ENCODE measurements at regions of chr2 and their contacts with region 1.

Region 1: GRCh38 chr2:96868555-96869280 is 1.2 kb downstream of the SEMA4C start:
- DNase-seq: peak; percentile 72 to 87
- H3K4me3 ChIP-seq: peak overlapping the region; percentile 82
- H3K27ac ChIP-seq: peak overlapping the region; percentile 43; the same call in 1 of the 2 replicates
- H3K4me1 ChIP-seq: peaks cover 37% of the 10 kb centered on the region
- H3K27me3 ChIP-seq: no peaks in the 10 kb centered on the region
- CTCF ChIP-seq: peak; percentile 86

Region 2: DNA sequence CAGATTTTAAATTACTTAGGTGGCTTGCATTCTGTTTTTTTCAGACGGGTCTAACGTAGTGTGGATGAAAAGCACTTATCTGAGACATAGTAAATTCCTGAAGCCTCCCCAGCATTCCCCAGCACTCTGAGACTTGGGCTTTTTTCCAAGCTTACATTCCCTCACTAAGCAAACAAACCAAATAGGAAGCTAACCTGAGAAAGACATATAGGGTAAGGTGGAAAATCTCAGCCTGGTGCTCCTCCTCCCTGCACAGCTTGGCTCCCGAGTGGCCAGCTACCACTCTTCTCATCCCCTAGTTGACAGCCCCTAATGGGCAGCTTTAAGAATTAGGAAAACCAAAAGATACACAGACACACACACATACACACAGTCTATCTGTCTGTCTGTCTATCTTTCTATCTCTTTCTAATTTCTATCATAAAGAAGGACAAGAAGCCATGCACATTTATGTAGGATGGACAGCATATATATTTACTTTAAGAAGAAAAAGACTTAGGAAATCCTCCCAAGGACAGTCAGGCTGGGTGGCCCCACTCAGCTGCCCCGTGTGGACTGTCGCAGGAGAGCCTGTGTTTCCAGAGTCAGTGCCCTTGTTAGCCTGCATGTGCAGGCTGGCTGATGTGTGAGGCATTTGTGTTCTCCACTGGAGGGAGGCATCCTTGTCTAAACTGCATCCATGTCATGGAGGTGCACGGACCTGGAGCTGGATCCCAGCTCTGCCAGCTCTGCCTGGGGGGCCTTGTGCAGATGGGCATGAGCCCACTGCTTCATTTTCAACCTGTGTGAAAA is 44.4 kb before region 1 on chr2:
- CTCF ChIA-PET with region 1: no interaction called
- POLR2A ChIA-PET with region 1: no interaction called
- intact Hi-C with region 1: no loop called
- DNase-seq: no peak
- H3K4me3 ChIP-seq: no peak overlapping the region
- H3K27ac ChIP-seq: no peak overlapping the region
- H3K4me1 ChIP-seq: peaks cover 10% of the 10 kb centered on the region; the same call in 1 of the 2 replicates
- H3K27me3 ChIP-seq: no peaks in the 10 kb centered on the region
- CTCF ChIP-seq: no peak

Region 3: DNA sequence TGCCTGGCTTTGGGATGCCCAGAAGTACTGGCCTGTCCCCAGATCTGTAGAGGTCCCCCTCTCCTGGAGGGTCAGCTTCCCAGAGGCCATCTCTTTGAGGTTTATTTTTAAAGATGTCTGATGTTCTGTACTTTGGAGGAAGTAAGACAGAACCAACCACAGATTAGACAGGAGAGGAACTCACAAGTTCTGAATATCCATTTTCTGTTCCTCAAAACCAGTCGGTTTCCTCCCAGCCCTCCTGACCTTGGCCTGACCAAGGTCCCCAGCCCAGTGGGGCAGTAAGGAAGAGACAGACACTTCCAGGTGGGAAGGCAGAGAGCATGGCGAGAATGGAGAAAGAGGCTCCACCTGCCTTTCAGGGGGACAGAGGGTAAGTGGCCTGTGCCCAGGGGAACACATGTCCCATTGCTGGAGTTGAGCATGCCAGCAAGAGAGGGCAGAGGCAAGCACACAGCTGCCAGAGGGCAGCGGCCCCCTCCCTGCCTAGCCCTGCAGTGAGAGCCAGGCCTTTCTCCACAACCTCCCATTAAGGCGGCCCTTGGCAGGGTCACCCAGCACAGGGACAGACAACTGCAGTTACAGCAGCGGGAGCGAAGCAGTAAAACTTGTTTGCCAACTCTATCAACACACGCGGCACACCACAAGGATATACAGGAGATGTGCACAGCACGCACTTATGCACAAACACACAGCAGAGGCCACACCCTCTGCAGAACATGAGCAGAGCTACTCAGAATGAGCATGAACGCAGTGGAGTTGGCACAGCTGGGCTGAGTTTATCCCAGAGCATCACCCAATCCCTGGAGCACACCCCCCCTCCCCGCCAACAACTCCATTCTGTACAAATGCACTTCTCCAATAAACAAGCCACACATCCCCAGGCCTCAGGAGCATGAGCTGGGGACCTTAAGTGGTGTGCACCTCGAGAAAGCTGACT is 19.6 kb after region 1 on chr2:
- CTCF ChIA-PET with region 1: interaction called, 5 read pairs
- POLR2A ChIA-PET with region 1: interaction called, 13 read pairs
- intact Hi-C with region 1: loop called (anchors 2 kb)
- DNase-seq: peak; percentile 89 to 98
- H3K4me3 ChIP-seq: peak overlapping the region; percentile 29; the same call in 1 of the 2 replicates
- H3K27ac ChIP-seq: peak overlapping the region; percentile 69
- H3K4me1 ChIP-seq: peaks cover 71% of the 10 kb centered on the region
- H3K27me3 ChIP-seq: no peaks in the 10 kb centered on the region
- CTCF ChIP-seq: no peak

Region 4: GRCh38 chr2:96895726-96896651 is 27.3 kb after region 1 on chr2:
- CTCF ChIA-PET with region 1: no interaction called
- POLR2A ChIA-PET with region 1: no interaction called
- intact Hi-C with region 1: loop called (anchors 2 kb)
- DNase-seq: peak in 1 of 2 experiments; percentile 80
- H3K4me3 ChIP-seq: no peak overlapping the region
- H3K27ac ChIP-seq: 0 out of 2 replicates have a peak overlapping the region, but pooled peaks have one; percentile 7
- H3K4me1 ChIP-seq: peaks cover 58% of the 10 kb centered on the region
- H3K27me3 ChIP-seq: no peaks in the 10 kb centered on the region
- CTCF ChIP-seq: no peak

Region 5: DNA sequence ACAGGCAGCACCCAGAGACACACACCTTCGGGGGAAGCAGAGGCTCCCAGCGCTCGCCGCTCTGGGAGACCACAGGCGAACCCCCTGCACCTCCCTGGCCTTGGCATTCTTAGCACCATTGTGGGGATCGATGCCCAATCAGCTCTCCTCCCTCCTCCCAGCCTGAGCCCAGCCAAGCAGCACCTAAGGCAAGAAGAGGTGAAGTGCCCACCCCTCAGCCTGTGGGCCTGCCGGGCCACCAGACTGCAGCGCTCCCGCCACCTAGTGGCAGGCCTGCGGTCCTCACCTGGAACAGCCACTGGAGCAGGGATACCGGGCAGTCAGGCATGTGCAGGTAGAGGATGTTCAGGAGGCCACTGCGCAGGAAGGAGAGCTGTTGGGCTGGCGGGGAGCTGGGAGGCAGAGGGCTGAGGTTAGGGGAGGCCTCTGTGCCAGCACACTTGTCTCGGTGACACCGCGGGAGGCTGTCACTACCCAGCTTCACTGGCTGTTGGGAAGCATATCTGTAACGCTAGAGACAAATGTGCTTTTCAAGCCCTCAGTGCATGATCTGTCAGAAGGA is 82.5 kb after region 1 on chr2:
- CTCF ChIA-PET with region 1: interaction called, 3 read pairs
- POLR2A ChIA-PET with region 1: interaction called, 28 read pairs
- intact Hi-C with region 1: loop called (anchors 1 kb)
- DNase-seq: peak; percentile 57 to 88
- H3K4me3 ChIP-seq: no peak overlapping the region
- H3K27ac ChIP-seq: no peak overlapping the region
- H3K4me1 ChIP-seq: no peaks in the 10 kb centered on the region
- H3K27me3 ChIP-seq: no peaks in the 10 kb centered on the region
- CTCF ChIP-seq: peak; percentile 99

Measured in PC-9 (cell line).